PC-9 (cell line): ENCODE measurements at regions of chr1 and their contacts with region 1.

Region 1: GRCh38 chr1:2227346-2228153 is 569 bp upstream of the SKI start:
- DNase-seq: peak; percentile 83 to 97
- H3K4me3 ChIP-seq: peak overlapping the region; percentile 78
- H3K27ac ChIP-seq: peak overlapping the region; percentile 72
- H3K4me1 ChIP-seq: peaks cover 13% of the 10 kb centered on the region
- H3K27me3 ChIP-seq: no peaks in the 10 kb centered on the region
- CTCF ChIP-seq: no peak; the same call in 1 of the 2 replicates

Region 2: GRCh38 chr1:2212542-2213491 is 14.7 kb before region 1 on chr1:
- CTCF ChIA-PET with region 1: no interaction called
- POLR2A ChIA-PET with region 1: interaction called, 3 read pairs
- intact Hi-C with region 1: loop called (anchors 1 kb)
- DNase-seq: peak; percentile 80 to 84
- H3K4me3 ChIP-seq: peak overlapping the region; percentile 48; the same call in 1 of the 2 replicates
- H3K27ac ChIP-seq: peak overlapping the region; percentile 51
- H3K4me1 ChIP-seq: peaks cover 40% of the 10 kb centered on the region
- H3K27me3 ChIP-seq: no peaks in the 10 kb centered on the region
- CTCF ChIP-seq: peak; percentile 47; the same call in 1 of the 2 replicates

Region 3: DNA sequence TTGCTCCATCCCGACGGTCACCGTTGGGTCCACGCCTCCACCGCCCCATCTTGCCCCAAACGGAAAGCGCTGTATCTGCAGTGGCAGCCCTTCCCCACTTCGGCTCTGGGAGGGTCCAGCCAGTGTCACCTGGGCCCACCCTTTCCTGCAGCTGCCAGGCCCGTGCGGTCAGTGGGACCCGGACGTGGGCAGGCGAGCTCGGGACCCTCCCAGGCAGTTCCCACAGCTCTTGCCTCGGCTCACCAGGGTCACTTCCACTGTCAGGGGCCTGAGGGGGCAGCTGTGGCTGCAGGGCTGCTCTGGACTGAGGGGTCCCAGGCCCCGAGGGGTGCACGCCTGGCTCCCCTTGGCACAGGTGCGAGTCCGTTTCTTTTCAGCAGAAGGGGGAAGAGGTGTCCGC is 81.3 kb after region 1 on chr1:
- CTCF ChIA-PET with region 1: no interaction called
- POLR2A ChIA-PET with region 1: interaction called, 10 read pairs
- intact Hi-C with region 1: loop called (anchors 5 kb)
- DNase-seq: no peak
- H3K4me3 ChIP-seq: no peak overlapping the region
- H3K27ac ChIP-seq: no peak overlapping the region
- H3K4me1 ChIP-seq: peaks cover 6% of the 10 kb centered on the region; the same call in 1 of the 2 replicates
- H3K27me3 ChIP-seq: no peaks in the 10 kb centered on the region
- CTCF ChIP-seq: no peak

Region 4: GRCh38 chr1:2586154-2587070 is 358.9 kb after region 1 on chr1 and contains the start of gene PRXL2B:
- CTCF ChIA-PET with region 1: no interaction called
- POLR2A ChIA-PET with region 1: no interaction called
- intact Hi-C with region 1: no loop called
- DNase-seq: peak; percentile 91 to 98
- H3K4me3 ChIP-seq: peak within 1 kb of the TSS; percentile 75
- H3K27ac ChIP-seq: peak within 1 kb of the TSS; percentile 2; the same call in 1 of the 2 replicates
- H3K4me1 ChIP-seq: no peaks in the 10 kb centered on the region
- H3K27me3 ChIP-seq: no peaks in the 10 kb centered on the region
- CTCF ChIP-seq: no peak
- total RNA-seq, gene PRXL2B: 26.1 and 35.3 TPM in 2 replicates